ENCODE measurements at regions of chr1 and their contacts with region 1.

Region 1: DNA sequence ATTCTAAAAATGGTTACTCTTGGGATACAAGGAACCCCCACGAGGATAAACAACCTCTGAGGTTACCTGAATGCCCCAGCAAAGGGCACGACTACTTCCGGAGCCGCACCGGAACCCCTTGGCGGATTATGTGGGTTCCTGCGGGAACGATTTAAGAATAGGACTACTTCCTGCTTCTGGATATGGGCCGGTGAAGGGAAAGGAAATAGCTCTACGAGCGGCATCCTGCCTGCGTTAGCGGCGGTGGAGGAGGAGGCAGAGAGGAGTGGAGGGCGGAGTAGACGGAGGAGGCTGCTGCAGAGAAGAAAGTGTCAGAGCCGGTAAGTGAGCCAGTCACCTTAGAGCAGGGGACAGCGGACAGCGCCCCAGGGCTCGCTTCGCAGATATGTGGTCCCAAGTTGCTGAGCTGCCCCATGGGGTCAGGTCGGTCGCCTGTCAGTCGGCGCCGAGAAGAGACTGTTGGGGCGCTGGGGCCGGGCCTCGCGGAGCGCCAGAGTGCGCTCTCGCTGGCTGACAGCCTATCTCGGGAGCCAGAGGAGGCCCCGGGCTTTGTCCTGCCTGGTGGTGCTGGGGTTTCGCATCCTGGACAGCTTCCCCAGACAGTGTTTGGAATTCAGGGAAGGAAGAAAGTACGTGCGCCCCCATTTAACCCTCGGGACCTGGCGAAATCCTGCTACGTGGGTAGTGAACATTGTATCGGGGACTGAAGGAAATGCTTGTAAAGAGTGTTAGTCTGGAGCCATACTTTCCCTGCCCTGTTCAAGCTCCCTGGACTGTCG is at the start of gene KLHL20:
- DNase-seq: peak; percentile 93
- H3K4me3 ChIP-seq: peak within 1 kb of the TSS; percentile 75 to 96 (median 92)
- H3K27ac ChIP-seq: peak within 1 kb of the TSS; percentile 50
- H3K4me1 ChIP-seq: peaks cover 23% of the 10 kb centered on the region
- H3K27me3 ChIP-seq: peaks cover 4 to 20% of the 10 kb centered on the region in 2 experiments
- CTCF ChIP-seq: no peak
- POLR2A ChIP-seq: peak; percentile 89
- total RNA-seq, gene KLHL20: 23.8 and 26.9 TPM in 2 replicates

Region 2: GRCh38 chr1:173429471-173430402 is 285.2 kb before region 1 on chr1:
- CTCF ChIA-PET with region 1: interaction called, 10 read pairs
- POLR2A ChIA-PET with region 1: no interaction called
- dilution Hi-C with region 1: no loop called
- intact Hi-C with region 1: loop called (anchors 1 kb)
- DNase-seq: peak; percentile 75
- H3K4me3 ChIP-seq: no peak overlapping the region
- H3K27ac ChIP-seq: peak overlapping the region; percentile 64
- H3K4me1 ChIP-seq: peaks cover 12% of the 10 kb centered on the region
- H3K27me3 ChIP-seq: no peaks in the 10 kb centered on the region
- CTCF ChIP-seq: peak; percentile 56 to 65
- POLR2A ChIP-seq: no peak

Region 3: GRCh38 chr1:173616859-173617258 is 98.1 kb before region 1 on chr1:
- CTCF ChIA-PET with region 1: no interaction called
- POLR2A ChIA-PET with region 1: no interaction called
- dilution Hi-C with region 1: no loop called
- intact Hi-C with region 1: no loop called
- DNase-seq: no peak
- H3K4me3 ChIP-seq: no peak overlapping the region
- H3K27ac ChIP-seq: no peak overlapping the region
- H3K4me1 ChIP-seq: no peaks in the 10 kb centered on the region
- H3K27me3 ChIP-seq: no peaks in the 10 kb centered on the region
- CTCF ChIP-seq: no peak
- POLR2A ChIP-seq: no peak

Region 4: GRCh38 chr1:173669491-173669941 is 45.4 kb before region 1 on chr1 and contains the start of gene ANKRD45:
- CTCF ChIA-PET with region 1: interaction called, 3 read pairs
- POLR2A ChIA-PET with region 1: no interaction called
- dilution Hi-C with region 1: no loop called
- intact Hi-C with region 1: loop called (anchors 2 kb)
- DNase-seq: peak; percentile 57
- H3K4me3 ChIP-seq: peak within 1 kb of the TSS; percentile 4 to 43 (median 41)
- H3K27ac ChIP-seq: no peak within 1 kb of the TSS
- H3K4me1 ChIP-seq: no peaks in the 10 kb centered on the region
- H3K27me3 ChIP-seq: peaks cover 0 to 5% of the 10 kb centered on the region in 2 experiments
- CTCF ChIP-seq: peak in 1 of 2 donors; percentile 16
- POLR2A ChIP-seq: no peak
- total RNA-seq, gene ANKRD45: 0.37 and 0.62 TPM in 2 replicates

Region 5: DNA sequence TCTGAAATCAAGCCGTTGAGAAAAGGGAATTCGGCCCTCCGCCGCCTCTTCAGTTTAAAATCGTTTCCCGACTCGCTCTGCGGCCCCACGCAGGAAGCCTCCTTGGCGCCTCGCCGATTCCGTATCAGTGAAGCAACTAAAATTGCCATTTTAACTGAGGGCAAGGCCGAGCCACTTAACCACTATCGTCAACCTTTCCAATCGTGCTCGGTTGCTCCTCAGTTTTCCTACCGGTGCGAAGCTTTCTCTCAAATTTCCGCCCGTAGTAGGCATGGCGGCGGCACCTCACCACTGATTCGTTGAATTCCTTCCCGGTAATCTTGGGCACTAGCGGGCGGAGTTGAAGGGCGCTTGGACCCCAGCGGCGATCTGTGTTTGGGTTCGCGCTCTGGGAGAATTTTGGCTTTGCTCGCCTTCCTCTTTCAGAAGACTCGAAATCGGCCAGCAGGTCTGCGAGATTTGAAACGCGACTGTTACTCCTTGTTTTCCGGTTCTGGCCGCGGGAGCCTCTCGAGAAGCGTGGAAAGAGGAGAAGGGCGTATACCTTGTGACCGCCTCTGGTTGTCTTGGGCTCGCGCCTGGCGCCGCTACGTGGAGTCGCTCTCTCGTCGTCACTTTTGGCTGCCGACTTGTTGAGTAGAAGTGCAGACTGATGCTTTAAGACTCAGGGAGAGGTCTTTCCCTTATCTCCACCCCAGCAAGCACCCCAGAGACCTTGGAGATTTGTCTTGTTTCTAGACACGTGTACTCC is 109.6 kb after region 1 on chr1 and contains the starts of genes CENPL and DARS2:
- CTCF ChIA-PET with region 1: interaction called, 7 read pairs
- POLR2A ChIA-PET with region 1: no interaction called
- dilution Hi-C with region 1: no loop called
- intact Hi-C with region 1: loop called (anchors 1 kb)
- DNase-seq: peak; percentile 98
- H3K4me3 ChIP-seq: peak within 1 kb of the TSS; percentile 87 to 92 (median 87)
- H3K27ac ChIP-seq: peak within 1 kb of the TSS; percentile 92
- H3K4me1 ChIP-seq: peaks cover 15% of the 10 kb centered on the region
- H3K27me3 ChIP-seq: no peaks in the 10 kb centered on the region
- CTCF ChIP-seq: no peak
- POLR2A ChIP-seq: peak; percentile 85
- total RNA-seq, gene CENPL: 19.0 and 20.8 TPM in 2 replicates
- total RNA-seq, gene DARS2: 30.5 and 33.6 TPM in 2 replicates

Region 6: DNA sequence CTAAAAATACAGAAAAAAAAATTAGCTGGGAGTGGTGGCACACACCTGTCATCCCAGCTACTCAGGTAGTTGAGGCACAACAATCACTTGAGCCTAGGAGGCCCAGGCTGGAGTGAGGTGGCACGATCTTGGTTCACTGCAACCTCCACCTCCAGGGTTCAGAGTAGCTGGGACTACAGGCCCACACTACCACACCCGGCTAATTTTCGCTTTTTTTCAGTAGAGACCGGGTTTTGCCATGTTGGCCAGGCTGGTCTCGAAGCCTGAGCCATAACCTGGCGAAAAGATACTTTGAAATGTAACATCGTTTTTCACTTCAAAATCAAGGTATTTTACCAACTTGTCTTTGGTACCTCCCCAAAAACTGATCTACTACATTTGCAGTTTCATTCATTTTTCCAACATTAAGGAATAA is 146.8 kb after region 1 on chr1:
- CTCF ChIA-PET with region 1: no interaction called
- POLR2A ChIA-PET with region 1: no interaction called
- dilution Hi-C with region 1: no loop called
- intact Hi-C with region 1: no loop called
- DNase-seq: no peak
- H3K4me3 ChIP-seq: no peak overlapping the region
- H3K27ac ChIP-seq: no peak overlapping the region
- H3K4me1 ChIP-seq: peaks cover 19% of the 10 kb centered on the region
- H3K27me3 ChIP-seq: no peaks in the 10 kb centered on the region
- CTCF ChIP-seq: no peak
- POLR2A ChIP-seq: peak; percentile 62

Region 7: GRCh38 chr1:174159252-174160108 is 444.5 kb after region 1 on chr1 and contains the start of gene RABGAP1L:
- CTCF ChIA-PET with region 1: no interaction called
- POLR2A ChIA-PET with region 1: no interaction called
- dilution Hi-C with region 1: no loop called
- intact Hi-C with region 1: loop called (anchors 10 kb)
- DNase-seq: peak; percentile 96
- H3K4me3 ChIP-seq: peak within 1 kb of the TSS; percentile 77 to 91 (median 81)
- H3K27ac ChIP-seq: no peak within 1 kb of the TSS
- H3K4me1 ChIP-seq: peaks cover 8% of the 10 kb centered on the region
- H3K27me3 ChIP-seq: no peaks in the 10 kb centered on the region
- CTCF ChIP-seq: no peak
- POLR2A ChIP-seq: no peak
- total RNA-seq, gene RABGAP1L: 20.7 and 22.2 TPM in 2 replicates

Measured in endothelial cell of umbilical vein (primary cell).